Prostate gland (tissue), 2 donors: ENCODE measurements at regions of chr6 and their contacts with region 1.

Region 1: GRCh38 chr6:168132531-168133167 is 53.6 kb upstream of the FRMD1 start:
- DNase-seq: peak; percentile 58
- H3K4me3 ChIP-seq: no peak overlapping the region
- H3K27ac ChIP-seq: no peak overlapping the region
- H3K4me1 ChIP-seq: no peaks in the 10 kb centered on the region
- H3K27me3 ChIP-seq: no peaks in the 10 kb centered on the region
- CTCF ChIP-seq: peak; percentile 11 to 68 (median 54)
- POLR2A ChIP-seq: no peak

Region 2: DNA sequence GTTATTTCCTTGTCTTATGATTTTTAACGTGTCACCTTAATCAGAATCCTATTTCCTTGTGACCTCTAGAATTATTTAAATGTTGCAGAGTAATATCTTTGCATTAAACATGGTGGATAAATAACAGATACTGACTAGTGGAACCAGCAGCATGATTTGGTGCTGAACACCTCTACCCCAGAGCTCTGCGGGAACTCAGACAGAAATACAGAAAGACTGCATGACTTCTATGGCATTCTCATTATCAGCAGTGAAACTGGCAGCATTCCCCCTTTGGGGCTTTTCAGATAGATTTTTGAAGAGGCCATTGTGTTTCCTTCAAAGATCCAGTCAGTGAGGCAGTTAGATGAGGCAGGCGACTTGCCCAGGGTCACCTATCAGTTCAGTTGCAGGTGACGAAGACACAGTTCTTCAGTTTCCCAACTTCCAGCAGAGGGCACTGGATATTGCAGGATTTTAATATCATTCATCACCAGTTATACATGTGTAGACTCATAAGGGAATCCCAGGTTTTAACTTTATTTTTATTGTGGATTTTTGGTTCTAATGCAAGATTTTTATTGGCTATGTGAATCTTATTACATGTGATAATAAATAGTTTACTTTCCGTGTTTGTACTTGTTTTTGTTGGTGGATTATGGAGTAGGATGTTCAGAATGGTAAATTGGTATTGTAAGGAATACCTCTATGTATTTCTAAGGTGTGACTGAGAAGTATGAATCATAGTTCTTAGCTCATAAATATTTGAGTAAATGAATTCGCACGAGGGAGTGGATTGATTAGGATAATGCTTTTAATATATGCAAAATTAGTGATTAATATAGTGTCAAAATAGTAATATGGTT is 224.6 kb before region 1 on chr6:
- intact Hi-C with region 1: loop called (anchors 2 kb)
- DNase-seq: peak; percentile 42
- H3K4me3 ChIP-seq: peak overlapping the region; percentile 1 to 6
- H3K27ac ChIP-seq: peak overlapping the region; percentile 76 to 78
- H3K4me1 ChIP-seq: peaks cover 5% of the 10 kb centered on the region
- H3K27me3 ChIP-seq: no peaks in the 10 kb centered on the region
- CTCF ChIP-seq: peak; percentile 20 to 65 (median 60)
- POLR2A ChIP-seq: no peak

Region 3: DNA sequence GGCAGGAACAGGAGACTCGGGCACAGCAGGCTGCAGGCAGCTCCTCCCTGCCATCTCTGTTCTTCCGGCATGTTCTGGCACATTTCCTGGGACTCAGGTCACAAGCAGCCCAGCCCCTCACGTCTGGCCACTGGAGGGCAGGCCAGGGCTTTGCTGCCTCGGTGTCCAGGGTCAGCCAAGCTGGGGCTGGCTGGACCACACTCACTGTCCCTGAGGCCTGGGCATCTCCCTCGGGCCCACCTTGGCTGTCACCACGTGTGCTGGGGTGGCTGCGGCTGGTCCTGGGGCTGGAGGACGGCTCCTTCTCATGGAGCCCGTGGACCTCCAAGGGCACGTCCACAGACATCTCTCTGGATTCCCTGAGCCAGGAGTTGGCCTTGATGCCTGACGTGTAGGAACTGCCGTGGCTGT is 72.1 kb before region 1 on chr6:
- intact Hi-C with region 1: loop called (anchors 2 kb)
- DNase-seq: peak; percentile 56
- H3K4me3 ChIP-seq: no peak overlapping the region
- H3K27ac ChIP-seq: peak overlapping the region in 1 of 2 donors; percentile 9
- H3K4me1 ChIP-seq: no peaks in the 10 kb centered on the region
- H3K27me3 ChIP-seq: no peaks in the 10 kb centered on the region
- CTCF ChIP-seq: peak in 3 of 4 experiments; percentile 33 to 80 (median 66)
- POLR2A ChIP-seq: no peak